Activated B cell treated with CpG ODN at 0.5 μM for 24 hours (primary cell): ENCODE measurements at regions of chr9 and their contacts with region 1.

Region 1: GRCh38 chr9:27529316-27530278 is at the start of gene MOB3B:
- DNase-seq: peak; percentile 82
- ATAC-seq: peak; percentile 76
- H3K4me3 Mint-ChIP-seq: peak within 1 kb of the TSS; percentile 95
- H3K27ac Mint-ChIP-seq: peak within 1 kb of the TSS; percentile 91
- H3K4me1 Mint-ChIP-seq: peaks cover 43% of the 10 kb centered on the region
- H3K27me3 Mint-ChIP-seq: no peaks in the 10 kb centered on the region
- CTCF ChIP-seq: peak; percentile 23
- total RNA-seq, gene MOB3B: 7.3 and 10.0 TPM in 2 replicates

Region 2: GRCh38 chr9:27333241-27334052 is 196.2 kb before region 1 on chr9:
- CTCF ChIA-PET with region 1: interaction called, 201 read pairs
- POLR2A ChIA-PET with region 1: interaction called, 38 read pairs
- intact Hi-C with region 1: loop called (anchors 1 kb)
- DNase-seq: peak; percentile 48
- ATAC-seq: peak; percentile 96
- H3K4me3 Mint-ChIP-seq: no peak overlapping the region
- H3K27ac Mint-ChIP-seq: peak overlapping the region; percentile 36
- H3K4me1 Mint-ChIP-seq: peaks cover 13% of the 10 kb centered on the region
- H3K27me3 Mint-ChIP-seq: no peaks in the 10 kb centered on the region
- CTCF ChIP-seq: peak; percentile 38

Region 3: DNA sequence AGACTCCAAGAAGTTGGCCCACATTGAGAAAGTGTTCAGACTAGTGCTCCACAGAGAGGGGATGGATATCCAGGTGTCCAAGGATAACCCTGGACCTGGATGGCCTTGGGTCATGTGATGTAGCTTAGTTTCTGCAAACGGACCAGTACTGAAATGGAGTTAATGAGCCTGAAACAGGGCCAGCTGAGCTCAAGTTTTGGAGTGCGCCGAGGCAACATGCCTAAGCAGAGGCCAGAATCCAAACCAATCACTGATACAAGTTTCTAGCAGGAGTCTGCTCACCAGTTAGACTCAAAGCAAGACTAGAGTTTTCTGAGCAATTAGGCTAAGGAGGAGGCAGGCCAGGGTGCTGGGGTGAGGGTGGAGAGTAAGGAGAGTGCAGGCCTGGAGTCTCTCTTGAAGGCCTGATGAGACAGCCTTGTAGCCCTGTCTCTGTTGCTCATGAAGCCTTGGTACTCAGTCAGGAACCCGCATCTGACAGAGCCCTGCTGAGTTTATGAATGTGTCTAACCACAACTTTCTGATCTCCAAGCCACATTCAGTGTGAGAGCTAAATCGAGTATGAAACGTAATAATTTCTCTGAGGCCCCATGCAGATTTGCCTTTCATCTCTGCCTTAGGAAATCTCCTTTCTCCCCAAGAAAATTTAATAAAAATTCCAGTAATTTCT is 163.8 kb before region 1 on chr9:
- CTCF ChIA-PET with region 1: interaction called, 14 read pairs
- POLR2A ChIA-PET with region 1: interaction called, 26 read pairs
- intact Hi-C with region 1: loop called (anchors 1 kb)
- DNase-seq: no peak
- ATAC-seq: peak; percentile 73
- H3K4me3 Mint-ChIP-seq: peak overlapping the region; percentile 65
- H3K27ac Mint-ChIP-seq: peak overlapping the region; percentile 63
- H3K4me1 Mint-ChIP-seq: peaks cover 61% of the 10 kb centered on the region
- H3K27me3 Mint-ChIP-seq: no peaks in the 10 kb centered on the region
- CTCF ChIP-seq: no peak

Region 4: DNA sequence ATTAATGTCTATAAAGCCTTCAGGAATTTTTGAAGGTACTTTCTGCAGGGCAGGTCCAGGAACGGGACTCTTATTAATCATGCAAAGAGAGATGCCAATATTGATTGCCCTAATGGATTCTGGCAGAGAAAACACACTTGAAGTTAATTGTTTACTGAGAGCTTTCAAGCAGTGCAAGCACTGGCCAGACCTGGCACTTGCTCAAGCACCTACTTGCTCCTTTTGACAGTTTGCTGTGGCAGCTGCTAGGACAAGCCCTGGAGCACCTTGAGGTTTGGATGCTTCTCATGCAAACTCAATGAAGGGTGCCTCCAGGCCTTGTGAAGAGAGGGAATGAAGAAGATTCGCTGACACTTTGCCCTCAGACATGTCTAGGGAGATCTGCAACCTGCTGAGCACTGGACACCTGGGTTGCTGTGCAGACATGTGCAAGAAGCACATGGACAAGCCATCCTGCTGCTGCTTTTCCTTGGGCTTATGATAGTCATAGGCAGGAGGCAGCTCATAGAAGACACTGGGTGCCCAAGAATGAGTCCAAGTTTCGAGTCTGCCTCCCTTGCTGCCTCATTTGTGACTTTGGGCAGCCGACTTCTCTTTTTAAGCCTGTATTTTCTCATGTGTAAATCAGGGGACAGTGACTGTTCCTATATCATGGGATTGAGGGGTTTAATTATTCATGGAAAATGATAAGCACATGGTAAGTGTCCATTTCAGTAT is 143.8 kb before region 1 on chr9:
- CTCF ChIA-PET with region 1: interaction called, 11 read pairs
- POLR2A ChIA-PET with region 1: no interaction called
- intact Hi-C with region 1: no loop called
- DNase-seq: no peak
- ATAC-seq: no peak
- H3K4me3 Mint-ChIP-seq: peak overlapping the region; percentile 19
- H3K27ac Mint-ChIP-seq: no peak overlapping the region
- H3K4me1 Mint-ChIP-seq: peaks cover 86% of the 10 kb centered on the region
- H3K27me3 Mint-ChIP-seq: no peaks in the 10 kb centered on the region
- CTCF ChIP-seq: no peak

Region 5: DNA sequence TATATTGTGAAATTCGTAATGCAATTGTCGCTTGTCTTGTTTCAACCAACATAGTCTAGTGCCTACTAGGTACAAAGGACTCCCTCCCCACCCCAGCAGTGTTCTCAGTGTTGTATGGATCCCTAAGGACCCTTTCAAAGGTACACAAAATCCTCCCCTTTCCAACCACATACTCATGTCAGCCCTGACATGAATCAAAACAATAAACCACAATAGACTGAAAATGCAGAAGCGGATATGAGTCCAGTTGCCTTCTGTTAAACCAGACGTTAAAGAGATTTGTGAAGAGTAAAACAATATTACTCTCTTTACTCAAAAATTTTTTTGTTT is 87.9 kb before region 1 on chr9:
- CTCF ChIA-PET with region 1: interaction called, 5 read pairs
- POLR2A ChIA-PET with region 1: interaction called, 3 read pairs
- intact Hi-C with region 1: loop called (anchors 1 kb)
- DNase-seq: no peak
- ATAC-seq: peak; percentile 98
- H3K4me3 Mint-ChIP-seq: peak overlapping the region; percentile 32
- H3K27ac Mint-ChIP-seq: peak overlapping the region; percentile 75
- H3K4me1 Mint-ChIP-seq: peaks cover 69% of the 10 kb centered on the region
- H3K27me3 Mint-ChIP-seq: no peaks in the 10 kb centered on the region
- CTCF ChIP-seq: no peak

Region 6: GRCh38 chr9:27483576-27483975 is 46.0 kb before region 1 on chr9:
- CTCF ChIA-PET with region 1: interaction called, 14 read pairs
- POLR2A ChIA-PET with region 1: interaction called, 10 read pairs
- intact Hi-C with region 1: loop called (anchors 1 kb)
- DNase-seq: no peak
- ATAC-seq: peak; percentile 68
- H3K4me3 Mint-ChIP-seq: peak overlapping the region; percentile 49
- H3K27ac Mint-ChIP-seq: peak overlapping the region; percentile 81
- H3K4me1 Mint-ChIP-seq: peaks cover 91% of the 10 kb centered on the region
- H3K27me3 Mint-ChIP-seq: no peaks in the 10 kb centered on the region
- CTCF ChIP-seq: no peak

Region 7: DNA sequence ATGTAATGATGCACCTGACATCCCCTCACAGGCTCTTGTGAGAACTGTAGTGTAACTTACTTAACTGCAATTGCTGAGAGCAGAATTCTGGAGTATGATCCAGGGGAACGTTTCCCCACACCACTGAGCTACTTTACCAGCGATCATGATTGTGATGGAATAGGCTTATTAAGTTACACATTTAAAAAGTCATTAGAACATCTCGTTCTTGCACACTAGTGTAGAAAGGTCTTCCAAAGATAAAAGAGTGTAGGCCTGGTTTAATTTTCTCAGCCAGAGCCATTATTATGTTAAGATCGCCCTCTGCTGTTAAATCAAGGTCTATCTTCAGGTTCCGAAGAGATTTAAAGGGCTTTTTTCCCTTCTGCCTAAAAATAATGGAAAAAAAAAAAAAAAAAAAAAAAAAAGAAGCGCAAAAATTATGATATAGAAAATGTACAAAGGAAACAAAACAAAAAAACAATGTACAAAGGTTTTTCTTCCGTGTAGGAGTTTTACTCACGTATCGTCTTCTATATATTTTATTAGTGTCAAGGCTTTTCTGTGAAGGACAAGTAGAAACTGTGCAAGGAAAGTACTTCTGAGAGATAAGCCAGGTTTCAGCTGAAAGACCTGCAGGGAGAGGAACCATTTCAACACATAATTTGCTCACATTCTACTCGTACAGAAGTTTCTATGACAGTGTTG is 18.6 kb after region 1 on chr9:
- CTCF ChIA-PET with region 1: interaction called, 27 read pairs
- POLR2A ChIA-PET with region 1: no interaction called
- intact Hi-C with region 1: loop called (anchors 1 kb)
- DNase-seq: no peak
- ATAC-seq: no peak
- H3K4me3 Mint-ChIP-seq: no peak overlapping the region
- H3K27ac Mint-ChIP-seq: no peak overlapping the region
- H3K4me1 Mint-ChIP-seq: no peaks in the 10 kb centered on the region
- H3K27me3 Mint-ChIP-seq: no peaks in the 10 kb centered on the region
- CTCF ChIP-seq: no peak

Region 8: DNA sequence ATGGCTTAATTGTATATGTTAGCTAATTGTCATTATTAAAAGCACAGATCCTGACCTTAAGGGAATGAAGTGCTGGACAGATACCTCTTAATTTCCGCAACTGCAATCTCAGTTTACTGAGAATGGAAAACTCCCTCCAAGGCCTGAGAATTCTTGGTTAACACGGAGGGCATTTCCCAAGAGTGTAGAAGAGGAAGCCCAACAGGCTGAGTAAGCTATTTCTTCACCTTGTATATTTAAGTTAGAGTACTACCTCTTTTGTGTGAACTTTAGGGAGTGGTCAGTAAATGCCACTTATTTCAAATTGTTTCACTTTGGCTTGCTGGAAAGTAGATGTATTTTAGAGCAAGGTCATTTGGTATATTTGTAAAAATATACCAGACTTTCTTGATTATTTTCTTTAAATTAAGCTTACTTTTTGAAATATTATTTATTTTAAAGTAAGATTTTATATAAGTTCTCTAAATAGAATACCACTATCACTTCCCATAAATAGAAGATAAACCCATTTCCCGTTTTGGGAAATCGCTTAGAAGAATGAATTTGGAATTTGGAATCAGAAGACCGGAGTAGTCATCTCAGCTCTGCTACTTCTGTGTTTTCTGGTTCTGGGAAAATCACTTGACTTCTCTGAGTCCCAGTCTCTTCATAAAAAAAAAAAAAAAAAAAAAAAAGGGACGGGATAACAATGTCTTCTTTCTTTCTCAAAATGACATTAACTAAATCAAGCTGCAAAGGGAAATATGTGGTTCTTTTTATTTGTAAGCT is 69.7 kb after region 1 on chr9:
- CTCF ChIA-PET with region 1: no interaction called
- POLR2A ChIA-PET with region 1: no interaction called
- intact Hi-C with region 1: no loop called
- DNase-seq: no peak
- ATAC-seq: no peak
- H3K4me3 Mint-ChIP-seq: no peak overlapping the region
- H3K27ac Mint-ChIP-seq: no peak overlapping the region
- H3K4me1 Mint-ChIP-seq: peaks cover 4% of the 10 kb centered on the region
- H3K27me3 Mint-ChIP-seq: no peaks in the 10 kb centered on the region
- CTCF ChIP-seq: no peak